PC-9 (cell line): ENCODE measurements at regions of chr20 and their contacts with region 1.

Region 1: GRCh38 chr20:45329510-45330319 is 18.5 kb downstream of the SDC4 start:
- DNase-seq: peak; percentile 47 to 81
- H3K4me3 ChIP-seq: no peak overlapping the region
- H3K27ac ChIP-seq: no peak overlapping the region
- H3K4me1 ChIP-seq: peaks cover 13% of the 10 kb centered on the region
- H3K27me3 ChIP-seq: no peaks in the 10 kb centered on the region
- CTCF ChIP-seq: no peak

Region 2: GRCh38 chr20:45187662-45188061 is 142.1 kb before region 1 on chr20:
- CTCF ChIA-PET with region 1: no interaction called
- POLR2A ChIA-PET with region 1: no interaction called
- intact Hi-C with region 1: no loop called
- DNase-seq: no peak
- H3K4me3 ChIP-seq: no peak overlapping the region
- H3K27ac ChIP-seq: no peak overlapping the region
- H3K4me1 ChIP-seq: peaks cover 19% of the 10 kb centered on the region
- H3K27me3 ChIP-seq: no peaks in the 10 kb centered on the region
- CTCF ChIP-seq: no peak

Region 3: DNA sequence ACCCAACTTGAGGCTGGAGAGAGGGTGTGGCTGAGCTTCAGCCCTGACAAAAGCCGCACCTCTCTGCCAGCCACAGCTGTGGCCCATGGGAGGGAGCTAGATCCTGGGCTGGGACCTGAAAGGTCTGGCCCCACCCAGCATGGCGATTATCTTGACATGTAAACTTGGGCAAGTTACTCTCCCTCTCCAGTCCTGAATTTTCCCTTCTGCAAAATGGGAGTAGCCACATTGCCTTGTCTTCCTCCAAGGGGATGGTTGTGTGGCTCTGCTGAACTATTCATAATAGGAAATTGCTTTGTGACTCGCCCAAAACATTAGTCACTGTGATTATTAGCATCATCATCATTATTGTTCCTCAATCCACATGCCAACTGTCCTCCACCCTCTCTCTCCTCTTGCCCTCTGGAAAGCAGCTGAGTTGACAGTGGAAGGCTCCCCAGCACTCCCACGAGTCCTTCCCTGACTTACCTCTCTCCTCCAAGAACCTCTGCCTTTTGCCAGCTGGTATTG is 46.1 kb before region 1 on chr20:
- CTCF ChIA-PET with region 1: no interaction called
- POLR2A ChIA-PET with region 1: no interaction called
- intact Hi-C with region 1: no loop called
- DNase-seq: peak in 1 of 2 experiments; percentile 73
- H3K4me3 ChIP-seq: no peak overlapping the region
- H3K27ac ChIP-seq: no peak overlapping the region
- H3K4me1 ChIP-seq: peaks cover 29% of the 10 kb centered on the region
- H3K27me3 ChIP-seq: no peaks in the 10 kb centered on the region
- CTCF ChIP-seq: no peak

Region 4: DNA sequence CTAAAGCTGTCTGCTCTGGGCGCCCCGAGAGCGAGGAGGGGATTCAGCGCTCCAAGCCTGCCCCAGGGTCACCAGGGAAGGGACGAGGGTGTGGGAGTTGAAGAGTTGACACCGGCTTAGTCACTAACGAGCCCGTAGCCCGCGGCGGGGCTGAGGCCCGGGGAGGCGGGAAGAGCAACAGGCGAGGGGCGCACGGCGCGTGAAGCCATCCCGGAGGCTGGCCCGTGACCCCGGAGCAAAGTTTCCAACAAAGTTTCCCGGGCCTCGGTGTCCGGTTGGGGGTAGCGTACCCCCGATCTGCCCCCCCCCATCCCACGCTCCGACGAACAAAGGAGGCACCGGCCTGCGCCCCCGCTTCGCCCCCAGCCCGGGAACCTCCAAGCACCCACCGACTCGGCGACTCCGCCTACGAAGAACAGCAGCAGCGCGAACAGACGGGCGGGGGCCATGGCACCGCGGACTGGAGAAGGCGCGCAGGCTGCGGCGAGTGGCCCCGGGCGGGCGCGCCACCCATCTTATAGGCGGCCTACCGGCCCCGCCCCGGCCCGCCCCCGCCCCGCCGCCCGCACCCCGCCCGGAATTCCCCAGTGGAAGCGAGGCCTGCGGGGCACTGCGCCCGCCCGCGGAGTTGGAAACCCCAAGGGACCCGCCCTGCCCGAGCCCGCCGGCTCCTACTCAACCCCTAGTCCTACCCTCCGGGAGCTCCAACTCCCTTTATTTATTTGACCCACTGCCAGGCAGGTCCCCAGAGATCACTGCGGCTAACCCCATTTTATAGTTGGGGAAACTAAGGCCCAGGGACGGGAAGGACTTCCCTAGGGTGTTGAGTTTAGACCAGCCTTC is 18.4 kb after region 1 on chr20 and contains the start of gene SDC4:
- CTCF ChIA-PET with region 1: no interaction called
- POLR2A ChIA-PET with region 1: no interaction called
- intact Hi-C with region 1: loop called (anchors 2 kb)
- DNase-seq: peak; percentile 63 to 80
- H3K4me3 ChIP-seq: peak within 1 kb of the TSS; percentile 76
- H3K27ac ChIP-seq: peak within 1 kb of the TSS; percentile 92
- H3K4me1 ChIP-seq: peaks cover 44% of the 10 kb centered on the region
- H3K27me3 ChIP-seq: no peaks in the 10 kb centered on the region
- CTCF ChIP-seq: 0 out of 2 replicates have a peak, but pooled peaks have one; percentile 21
- total RNA-seq, gene SDC4: 114 and 117 TPM in 2 replicates